ENCODE measurements at regions of chr14 and their contacts with region 1.

Region 1: DNA sequence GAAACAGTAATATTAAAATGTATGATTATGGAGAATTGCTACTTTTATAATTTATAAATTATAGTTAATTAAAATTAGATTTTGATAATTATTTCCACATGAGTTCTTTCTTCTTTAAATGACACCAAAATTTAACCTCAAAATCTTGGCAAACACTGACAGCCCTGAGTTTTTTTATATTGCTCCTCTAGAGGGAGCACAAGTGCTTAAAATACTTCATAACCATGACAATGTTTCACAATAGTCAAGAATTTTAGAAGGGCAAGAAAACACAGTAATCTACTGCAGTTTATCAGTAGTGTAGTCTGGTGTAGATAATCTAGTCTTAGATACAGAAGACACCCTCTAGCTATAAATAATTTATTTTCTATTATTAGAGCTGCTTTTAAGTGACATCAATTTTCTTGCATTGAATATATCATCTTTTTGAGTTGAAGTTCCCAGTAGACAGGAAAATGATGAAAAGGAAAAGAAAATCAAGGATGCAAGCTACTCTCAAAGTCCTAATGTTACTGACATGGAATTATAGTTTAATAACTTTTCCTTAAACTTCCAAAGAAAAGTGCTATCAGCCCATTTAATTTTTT is 14.3 kb upstream of the PTGER2 start:
- DNase-seq: no peak
- ATAC-seq: peak; percentile 55 to 71
- H3K4me3 ChIP-seq: no peak overlapping the region
- H3K27ac ChIP-seq: no peak overlapping the region
- H3K4me1 ChIP-seq: no peaks in the 10 kb centered on the region
- H3K27me3 ChIP-seq: no peaks in the 10 kb centered on the region

Region 2: DNA sequence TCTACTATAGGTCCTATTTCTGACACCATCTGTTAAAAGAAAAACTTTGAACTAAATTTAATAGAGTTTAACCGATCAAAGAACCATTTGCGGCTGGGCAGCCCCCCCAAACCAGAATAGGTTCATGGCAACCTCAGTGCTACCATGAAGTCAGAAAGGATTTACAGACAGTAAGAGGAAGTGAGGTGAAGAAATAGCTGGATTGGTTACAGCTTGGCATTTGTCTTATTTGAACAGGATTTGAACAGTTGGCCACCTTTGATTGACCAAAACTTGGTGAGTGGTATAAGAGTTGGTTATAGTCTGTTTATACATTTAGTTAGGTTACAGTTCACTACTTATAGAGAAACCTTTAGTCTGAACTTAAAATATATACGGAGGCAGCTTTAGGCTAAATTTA is 163.6 kb after region 1 on chr14:
- intact Hi-C with region 1: loop called in 1 of 4 experiments (anchors 5 kb)
- DNase-seq: no peak
- ATAC-seq: no peak
- H3K4me3 ChIP-seq: no peak overlapping the region
- H3K27ac ChIP-seq: no peak overlapping the region
- H3K4me1 ChIP-seq: no peaks in the 10 kb centered on the region
- H3K27me3 ChIP-seq: no peaks in the 10 kb centered on the region

Region 3: GRCh38 chr14:52473557-52473956 is 173.8 kb after region 1 on chr14:
- intact Hi-C with region 1: loop called in 1 of 4 experiments (anchors 5 kb)
- DNase-seq: no peak
- ATAC-seq: no peak
- H3K4me3 ChIP-seq: no peak overlapping the region
- H3K27ac ChIP-seq: no peak overlapping the region
- H3K4me1 ChIP-seq: no peaks in the 10 kb centered on the region
- H3K27me3 ChIP-seq: no peaks in the 10 kb centered on the region

Region 4: GRCh38 chr14:52695481-52696091 is 395.8 kb after region 1 on chr14 and contains the start of gene ERO1A:
- intact Hi-C with region 1: loop called in 1 of 4 experiments (anchors 10 kb)
- DNase-seq: peak; percentile 87 to 93 (median 93)
- ATAC-seq: peak; percentile 96 to 97
- H3K4me3 ChIP-seq: peak within 1 kb of the TSS; percentile 78
- H3K27ac ChIP-seq: peak within 1 kb of the TSS; percentile 98
- H3K4me1 ChIP-seq: no peaks in the 10 kb centered on the region
- H3K27me3 ChIP-seq: no peaks in the 10 kb centered on the region
- total RNA-seq, gene ERO1A: 13.6 to 19.1 (median 15.7) TPM

Measured in right cardiac atrium (tissue), 5 donors.